Kidney (tissue), 22 donors: ENCODE measurements at regions of chr14 and their contacts with region 1.

Region 1: GRCh38 chr14:22391912-22392421 is 197.1 kb downstream of the DAD1 start:
- DNase-seq: peak in 4 of 5 donors; percentile 71 to 92 (median 83)
- H3K4me3 ChIP-seq: no peak overlapping the region
- H3K27ac ChIP-seq: no peak overlapping the region
- H3K4me1 ChIP-seq: peaks cover 0 to 6% (median 3%) of the 10 kb centered on the region in 3 donors
- H3K27me3 ChIP-seq: no peaks in the 10 kb centered on the region
- CTCF ChIP-seq: peak; percentile 87

Region 2: GRCh38 chr14:22556990-22557623 is 165.1 kb after region 1 on chr14:
- intact Hi-C with region 1: loop called (anchors 10 kb)
- DNase-seq: peak; percentile 88 to 95 (median 90)
- H3K4me3 ChIP-seq: peak overlapping the region; percentile 47 to 60 (median 49)
- H3K27ac ChIP-seq: peak overlapping the region in 1 of 2 donors; percentile 70
- H3K4me1 ChIP-seq: peaks cover 0 to 29% (median 11%) of the 10 kb centered on the region in 3 donors
- H3K27me3 ChIP-seq: no peaks in the 10 kb centered on the region
- CTCF ChIP-seq: peak; percentile 86

Region 3: DNA sequence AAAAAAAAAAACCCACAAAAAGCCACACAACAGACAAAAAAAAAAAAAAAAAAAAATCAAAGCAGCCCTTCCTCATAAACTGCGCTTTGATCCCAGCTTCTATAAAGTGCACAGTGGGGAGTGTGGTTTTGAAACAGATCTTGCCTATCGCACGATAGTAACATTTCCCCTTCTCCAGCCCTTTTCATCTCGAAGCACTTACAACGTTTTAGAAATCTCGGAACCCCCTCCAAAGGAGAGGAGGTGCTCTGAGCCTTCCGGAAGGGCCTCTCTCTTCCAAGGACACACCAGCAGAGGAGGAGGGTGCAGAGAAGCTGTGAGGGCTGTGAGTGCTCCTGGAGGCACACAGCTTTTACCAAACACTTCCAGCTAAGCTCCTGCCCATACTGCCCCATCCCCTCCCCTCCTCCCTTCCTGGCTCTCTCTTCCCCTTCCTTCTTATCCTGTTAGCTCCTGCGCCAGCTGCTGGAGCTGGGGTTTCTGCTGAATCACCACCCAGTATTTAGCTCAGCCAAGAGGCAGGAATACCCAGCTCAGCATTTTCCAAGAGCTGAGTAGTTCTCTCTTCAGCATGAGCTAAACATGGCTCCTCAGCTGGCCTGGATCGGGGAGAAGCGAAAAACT is 763.1 kb after region 1 on chr14:
- intact Hi-C with region 1: no loop called
- DNase-seq: peak; percentile 32 to 76 (median 60)
- H3K4me3 ChIP-seq: peak overlapping the region in 1 of 3 donors; percentile 19
- H3K27ac ChIP-seq: peak overlapping the region; percentile 87 to 92
- H3K4me1 ChIP-seq: peaks cover 2 to 29% (median 25%) of the 10 kb centered on the region in 3 donors
- H3K27me3 ChIP-seq: no peaks in the 10 kb centered on the region
- CTCF ChIP-seq: no peak